ENCODE measurements at regions of chr13 and their contacts with region 1.

Region 1: DNA sequence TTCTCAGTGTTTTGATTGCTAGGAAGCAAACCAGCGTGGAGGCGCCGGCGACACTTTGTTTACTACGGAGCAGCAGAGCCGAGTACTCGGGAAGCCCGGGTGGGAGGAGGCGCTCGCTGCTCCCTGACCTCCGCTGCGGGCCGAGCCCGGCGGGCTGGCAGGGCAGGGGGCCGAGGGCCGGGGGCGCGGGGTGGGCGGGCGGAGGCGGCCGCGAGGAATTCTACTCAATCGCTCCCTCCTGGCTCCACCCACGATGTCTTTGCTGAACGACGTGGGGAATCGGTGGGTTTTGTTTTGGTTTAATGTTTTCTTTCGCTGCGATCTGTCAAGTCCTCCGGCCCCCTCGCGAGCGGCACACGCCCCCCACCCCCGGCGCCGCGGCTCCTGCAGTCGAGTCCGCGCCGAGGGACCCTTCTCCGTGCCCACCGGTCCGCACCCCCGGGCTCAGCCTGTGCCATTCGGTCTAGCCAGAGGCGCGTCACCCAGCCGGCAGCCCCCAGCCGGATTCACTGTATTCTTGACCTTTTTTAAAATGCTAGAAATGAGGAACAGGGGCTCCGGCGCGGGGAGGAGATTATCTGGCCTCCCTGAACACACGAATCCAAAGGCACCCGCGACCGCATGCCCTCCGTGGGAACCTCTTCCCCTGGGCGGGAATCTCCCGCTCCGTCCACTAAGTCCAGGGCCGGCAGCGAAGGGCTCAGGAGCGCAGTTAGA is 622 bp upstream of the FOXO1 start:
- DNase-seq: peak; percentile 36
- CTCF ChIP-seq: no peak

Region 2: GRCh38 chr13:40069173-40070044 is 597.7 kb before region 1 on chr13:
- CTCF ChIA-PET with region 1: interaction called, 15 read pairs
- POLR2A ChIA-PET with region 1: no interaction called
- DNase-seq: peak; percentile 59
- CTCF ChIP-seq: peak; percentile 77

Region 3: GRCh38 chr13:40648040-40648439 is 19.0 kb before region 1 on chr13:
- CTCF ChIA-PET with region 1: interaction called, 10 read pairs
- POLR2A ChIA-PET with region 1: no interaction called
- DNase-seq: no peak
- CTCF ChIP-seq: no peak

Region 4: DNA sequence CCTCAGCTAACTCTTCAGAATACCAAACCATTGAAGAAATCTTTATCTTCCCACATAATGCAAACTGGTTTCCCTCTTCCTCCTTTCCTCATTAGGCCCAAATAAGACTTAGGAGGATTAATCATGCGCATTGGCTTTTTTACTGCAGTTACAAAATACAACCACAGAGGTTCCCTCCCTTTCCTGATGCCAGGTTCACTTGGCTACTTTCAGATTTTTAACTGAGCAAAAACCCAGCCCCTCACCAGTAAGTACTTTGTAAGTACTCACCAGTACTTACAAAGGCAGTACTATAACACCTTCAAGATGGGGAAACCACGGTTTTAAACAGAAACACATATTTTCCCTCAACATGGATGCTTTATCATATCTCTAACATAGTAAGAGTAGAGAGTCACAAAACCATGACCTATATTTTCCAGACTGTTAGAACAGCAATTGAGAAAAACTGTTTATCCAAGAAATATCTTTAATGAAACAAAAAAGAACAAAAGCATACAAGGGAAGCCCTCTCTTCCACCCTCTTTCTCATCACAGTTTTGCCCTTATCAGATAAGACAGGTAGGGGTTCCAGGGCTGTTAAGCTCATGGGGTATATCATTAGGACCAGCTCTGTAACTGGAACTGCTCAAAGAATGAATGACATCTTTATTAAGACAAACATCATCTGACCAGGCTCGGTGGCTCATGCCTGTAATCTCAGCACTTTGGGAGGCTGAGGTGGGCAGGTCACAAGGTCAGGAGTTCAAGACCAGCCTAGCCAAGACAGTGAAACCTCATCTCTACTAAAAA is 13.3 kb before region 1 on chr13:
- CTCF ChIA-PET with region 1: interaction called, 10 read pairs
- POLR2A ChIA-PET with region 1: no interaction called
- DNase-seq: no peak
- CTCF ChIP-seq: no peak

Region 5: DNA sequence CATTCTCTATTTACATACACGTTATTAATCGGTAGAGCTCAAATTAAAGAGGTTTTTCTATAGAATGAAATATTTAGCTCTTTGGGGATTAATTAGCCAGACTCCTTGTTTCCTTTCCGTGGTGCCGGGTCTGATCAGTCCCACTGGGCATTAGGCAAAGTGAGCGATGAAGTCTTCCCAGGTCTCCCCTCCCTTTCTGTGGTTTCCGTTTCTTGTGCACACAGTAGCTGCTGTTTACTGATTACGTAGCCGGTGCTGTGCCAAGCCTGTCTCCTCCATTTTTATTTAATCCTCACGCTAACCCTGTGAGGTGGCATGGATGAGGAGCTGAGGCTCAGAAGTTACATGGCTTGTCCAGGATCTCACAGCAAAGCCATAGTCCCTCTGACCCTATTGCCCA is 131.3 kb after region 1 on chr13:
- CTCF ChIA-PET with region 1: no interaction called
- POLR2A ChIA-PET with region 1: no interaction called
- DNase-seq: no peak
- CTCF ChIP-seq: no peak

Region 6: DNA sequence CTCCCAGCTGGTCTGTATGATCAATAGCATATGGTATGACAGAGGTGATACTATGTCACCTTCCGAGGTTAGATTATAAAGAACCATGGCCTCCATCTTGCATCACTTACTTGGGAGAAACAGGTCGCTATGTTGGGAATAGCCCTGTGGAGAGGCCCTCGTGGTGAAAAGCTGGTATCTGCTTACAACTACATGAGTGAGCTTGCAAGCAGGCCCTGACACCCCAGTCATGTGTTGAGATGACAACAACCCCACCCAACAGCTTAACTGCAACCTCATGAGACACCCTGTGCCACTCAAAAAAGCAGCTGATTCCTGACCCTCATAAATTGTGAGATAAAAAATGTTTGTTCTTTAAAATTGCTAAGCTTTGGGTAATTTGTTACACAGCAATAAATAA is 577.5 kb after region 1 on chr13:
- CTCF ChIA-PET with region 1: no interaction called
- POLR2A ChIA-PET with region 1: no interaction called
- DNase-seq: no peak
- CTCF ChIP-seq: no peak

Measured in GM10248 (cell line).